ENCODE measurements at regions of chr6 and their contacts with region 1.

Region 1: GRCh38 chr6:51654647-51655046 is 432.8 kb downstream of the PKHD1 start:
- DNase-seq: no peak
- H3K4me3 ChIP-seq: no peak overlapping the region
- H3K27ac ChIP-seq: no peak overlapping the region
- H3K4me1 ChIP-seq: no peaks in the 10 kb centered on the region
- H3K27me3 ChIP-seq: no peaks in the 10 kb centered on the region
- CTCF ChIP-seq: no peak
- EP300 ChIP-seq: no peak
- POLR2A ChIP-seq: no peak

Region 2: GRCh38 chr6:51494342-51494741 is 160.3 kb before region 1 on chr6:
- intact Hi-C with region 1: no loop called
- DNase-seq: no peak
- H3K4me3 ChIP-seq: no peak overlapping the region
- H3K27ac ChIP-seq: no peak overlapping the region
- H3K4me1 ChIP-seq: no peaks in the 10 kb centered on the region
- H3K27me3 ChIP-seq: no peaks in the 10 kb centered on the region
- CTCF ChIP-seq: no peak
- EP300 ChIP-seq: no peak
- POLR2A ChIP-seq: no peak

Region 3: GRCh38 chr6:51678905-51679620 is 24.4 kb after region 1 on chr6:
- intact Hi-C with region 1: loop called in 1 of 4 experiments (anchors 1 kb)
- DNase-seq: no peak
- H3K4me3 ChIP-seq: no peak overlapping the region
- H3K27ac ChIP-seq: no peak overlapping the region
- H3K4me1 ChIP-seq: no peaks in the 10 kb centered on the region
- H3K27me3 ChIP-seq: no peaks in the 10 kb centered on the region
- CTCF ChIP-seq: no peak
- EP300 ChIP-seq: no peak
- POLR2A ChIP-seq: no peak

Measured in ovary (tissue), 10 donors.